Activated CD8-positive, alpha-beta memory T cell treated with anti-CD3 and anti-CD28 coated beads, Interleukin-2, amount 10 ng/mL, durations not matched to agents 7 days and 5 days (primary cell): ENCODE measurements at regions of chr5 and their contacts with region 1.

Region 1: DNA sequence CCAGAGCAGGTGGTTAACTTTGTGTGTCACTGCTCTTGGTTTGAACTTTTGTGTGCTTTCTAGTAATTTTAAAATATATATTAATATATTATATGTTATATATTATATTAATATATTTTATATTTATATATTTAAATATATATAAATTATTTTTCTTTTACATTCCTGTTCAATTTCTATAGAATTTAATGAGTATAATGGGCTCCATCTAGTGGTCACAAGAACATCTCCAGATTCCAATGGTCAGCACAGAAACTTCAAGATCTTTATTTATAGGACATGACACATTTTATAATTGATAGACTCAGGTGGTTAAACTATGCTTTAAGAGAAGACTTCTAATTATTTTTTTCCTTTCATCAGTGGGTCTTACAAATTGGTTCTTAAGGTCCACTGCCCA is 39.1 kb downstream of the COL23A1 start:
- DNase-seq: no peak
- ATAC-seq: no peak
- H3K4me3 Mint-ChIP-seq: no peak overlapping the region
- H3K27ac Mint-ChIP-seq: no peak overlapping the region
- H3K4me1 Mint-ChIP-seq: no peaks in the 10 kb centered on the region
- H3K27me3 Mint-ChIP-seq: peaks cover 12% of the 10 kb centered on the region

Region 2: GRCh38 chr5:178279725-178280438 is 271.2 kb before region 1 on chr5:
- CTCF ChIA-PET with region 1: interaction called, 15 read pairs
- DNase-seq: peak; percentile 73
- ATAC-seq: peak; percentile 86
- H3K4me3 Mint-ChIP-seq: no peak overlapping the region
- H3K27ac Mint-ChIP-seq: peak overlapping the region; percentile 54
- H3K4me1 Mint-ChIP-seq: peaks cover 4% of the 10 kb centered on the region
- H3K27me3 Mint-ChIP-seq: peaks cover 19% of the 10 kb centered on the region

Region 3: DNA sequence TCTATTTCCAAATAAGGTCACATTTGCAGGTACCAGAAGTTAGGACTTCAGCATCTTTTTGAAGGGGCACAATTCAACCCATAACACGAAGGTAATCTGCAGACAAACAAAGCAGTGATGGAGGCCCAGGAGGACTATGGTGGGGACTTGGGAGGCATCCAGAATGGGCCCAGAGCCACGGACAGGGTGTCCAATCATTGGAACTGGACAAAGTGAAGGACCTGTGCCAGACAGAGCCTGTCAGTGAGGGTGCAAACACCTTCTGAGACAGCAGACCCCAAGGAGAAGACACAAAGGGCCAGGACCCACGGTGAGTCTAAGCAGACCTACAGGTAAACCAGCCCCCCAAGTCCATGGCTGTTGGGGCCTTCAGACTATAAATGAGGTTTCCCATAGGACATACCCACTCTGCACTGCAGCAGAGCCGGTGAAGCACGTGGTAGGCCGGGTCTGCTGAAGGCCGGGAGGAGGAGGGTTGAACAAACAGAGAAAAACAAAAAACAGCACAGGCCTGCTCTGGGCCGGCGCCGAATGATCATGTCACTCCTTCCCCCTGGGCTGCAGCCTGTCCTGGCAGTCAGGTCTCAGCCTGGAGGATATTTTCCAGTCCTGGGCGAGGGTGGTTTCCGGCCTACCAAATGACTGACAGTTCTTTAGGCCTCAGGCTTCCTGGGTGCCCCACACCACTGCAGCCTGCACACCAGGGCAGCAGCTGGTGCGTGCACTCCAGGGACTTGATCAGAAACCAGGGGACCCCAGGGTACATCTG is 45.2 kb before region 1 on chr5:
- CTCF ChIA-PET with region 1: no interaction called
- DNase-seq: no peak
- ATAC-seq: no peak
- H3K4me3 Mint-ChIP-seq: no peak overlapping the region
- H3K27ac Mint-ChIP-seq: no peak overlapping the region
- H3K4me1 Mint-ChIP-seq: no peaks in the 10 kb centered on the region
- H3K27me3 Mint-ChIP-seq: peaks cover 2% of the 10 kb centered on the region